ENCODE measurements at regions of chr15 and their contacts with region 1.

Region 1: GRCh38 chr15:58517682-58518525 is 86.1 kb downstream of the LIPC start:
- DNase-seq: peak; percentile 44
- H3K4me3 Mint-ChIP-seq: no peak overlapping the region
- H3K27ac Mint-ChIP-seq: peak overlapping the region; percentile 86
- H3K4me1 Mint-ChIP-seq: peaks cover 79% of the 10 kb centered on the region
- H3K27me3 Mint-ChIP-seq: peaks cover 14% of the 10 kb centered on the region

Region 2: GRCh38 chr15:58346389-58346788 is 171.5 kb before region 1 on chr15:
- CTCF ChIA-PET with region 1: no interaction called
- DNase-seq: no peak
- H3K4me3 Mint-ChIP-seq: no peak overlapping the region
- H3K27ac Mint-ChIP-seq: no peak overlapping the region
- H3K4me1 Mint-ChIP-seq: no peaks in the 10 kb centered on the region
- H3K27me3 Mint-ChIP-seq: peaks cover 8% of the 10 kb centered on the region

Region 3: GRCh38 chr15:58475573-58476524 is 42.1 kb before region 1 on chr15:
- CTCF ChIA-PET with region 1: interaction called, 23 read pairs
- DNase-seq: no peak
- H3K4me3 Mint-ChIP-seq: peak overlapping the region; percentile 6
- H3K27ac Mint-ChIP-seq: peak overlapping the region; percentile 87
- H3K4me1 Mint-ChIP-seq: peaks cover 66% of the 10 kb centered on the region
- H3K27me3 Mint-ChIP-seq: no peaks in the 10 kb centered on the region

Region 4: DNA sequence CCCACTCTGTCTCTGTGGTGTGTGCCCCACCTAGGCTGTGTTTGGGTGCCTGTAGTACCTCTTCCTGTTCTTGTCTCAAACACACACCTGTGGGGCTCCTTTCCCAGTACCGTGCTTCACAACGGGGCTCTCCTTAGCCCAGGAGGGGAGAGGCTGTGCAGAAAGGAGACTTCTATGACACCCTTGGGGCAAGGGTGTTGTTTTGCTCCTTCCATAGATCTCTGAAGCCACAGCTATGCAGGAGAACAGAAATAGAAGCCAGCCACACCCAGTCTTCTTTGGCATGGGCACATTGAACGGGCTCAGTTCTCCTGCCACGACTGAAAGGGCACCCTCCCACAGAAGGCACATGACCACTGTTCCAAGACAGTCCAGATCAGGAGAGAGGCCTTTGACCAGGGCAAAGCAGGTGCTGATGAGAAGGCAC is 11.8 kb before region 1 on chr15:
- CTCF ChIA-PET with region 1: interaction called, 14 read pairs
- DNase-seq: no peak
- H3K4me3 Mint-ChIP-seq: no peak overlapping the region
- H3K27ac Mint-ChIP-seq: peak overlapping the region; percentile 78
- H3K4me1 Mint-ChIP-seq: peaks cover 26% of the 10 kb centered on the region
- H3K27me3 Mint-ChIP-seq: peaks cover 22% of the 10 kb centered on the region

Region 5: DNA sequence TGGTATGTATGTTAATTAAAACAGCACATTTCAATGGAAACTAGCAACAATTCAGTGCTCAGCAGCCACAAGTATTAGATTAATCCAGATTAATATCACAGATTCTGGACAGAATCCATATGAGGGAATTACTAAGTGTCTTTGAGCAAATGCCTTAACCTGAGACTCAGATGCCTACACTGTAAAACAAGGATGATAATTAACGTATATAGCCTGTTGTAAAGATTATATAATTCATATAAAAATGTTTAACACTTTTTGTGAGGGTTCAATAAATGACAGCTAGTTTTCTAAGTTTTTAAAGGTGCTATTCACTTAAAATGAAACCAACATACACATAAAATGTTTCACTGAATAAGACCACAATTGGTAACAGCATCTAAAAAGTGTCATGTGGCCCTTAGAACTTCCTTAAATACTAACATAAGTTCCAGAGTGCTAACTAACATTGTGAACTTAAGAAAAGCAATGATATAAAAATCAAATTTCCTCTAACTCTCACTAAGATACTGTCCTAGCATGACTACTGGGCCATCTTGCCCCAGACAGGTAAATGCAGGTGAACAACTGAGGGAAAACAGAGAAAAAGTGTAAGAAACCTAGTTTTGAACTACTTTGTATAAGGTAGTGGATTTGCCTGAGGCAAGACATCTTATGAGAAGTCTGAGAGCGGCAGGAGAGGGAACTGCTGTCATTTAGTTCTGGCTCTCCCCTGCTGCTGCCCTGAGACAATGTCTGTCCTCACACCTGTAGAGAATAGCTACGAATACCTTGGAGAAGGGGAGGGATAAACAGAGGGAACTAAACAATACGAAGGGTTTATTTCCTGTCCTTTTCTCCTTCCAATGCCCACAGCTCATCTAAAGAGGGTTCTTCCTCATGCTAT is 80.3 kb after region 1 on chr15:
- CTCF ChIA-PET with region 1: no interaction called
- DNase-seq: no peak
- H3K4me3 Mint-ChIP-seq: no peak overlapping the region
- H3K27ac Mint-ChIP-seq: no peak overlapping the region
- H3K4me1 Mint-ChIP-seq: peaks cover 19% of the 10 kb centered on the region
- H3K27me3 Mint-ChIP-seq: no peaks in the 10 kb centered on the region

Measured in activated naive CD4-positive, alpha-beta T cell treated with anti-CD3 and anti-CD28 coated beads, Interleukin-2, amount 10 ng/mL, durations not matched to agents 7 days and 5 days (primary cell).